H1 (cell line): ENCODE measurements at regions of chr3 and their contacts with region 1.

Region 1: DNA sequence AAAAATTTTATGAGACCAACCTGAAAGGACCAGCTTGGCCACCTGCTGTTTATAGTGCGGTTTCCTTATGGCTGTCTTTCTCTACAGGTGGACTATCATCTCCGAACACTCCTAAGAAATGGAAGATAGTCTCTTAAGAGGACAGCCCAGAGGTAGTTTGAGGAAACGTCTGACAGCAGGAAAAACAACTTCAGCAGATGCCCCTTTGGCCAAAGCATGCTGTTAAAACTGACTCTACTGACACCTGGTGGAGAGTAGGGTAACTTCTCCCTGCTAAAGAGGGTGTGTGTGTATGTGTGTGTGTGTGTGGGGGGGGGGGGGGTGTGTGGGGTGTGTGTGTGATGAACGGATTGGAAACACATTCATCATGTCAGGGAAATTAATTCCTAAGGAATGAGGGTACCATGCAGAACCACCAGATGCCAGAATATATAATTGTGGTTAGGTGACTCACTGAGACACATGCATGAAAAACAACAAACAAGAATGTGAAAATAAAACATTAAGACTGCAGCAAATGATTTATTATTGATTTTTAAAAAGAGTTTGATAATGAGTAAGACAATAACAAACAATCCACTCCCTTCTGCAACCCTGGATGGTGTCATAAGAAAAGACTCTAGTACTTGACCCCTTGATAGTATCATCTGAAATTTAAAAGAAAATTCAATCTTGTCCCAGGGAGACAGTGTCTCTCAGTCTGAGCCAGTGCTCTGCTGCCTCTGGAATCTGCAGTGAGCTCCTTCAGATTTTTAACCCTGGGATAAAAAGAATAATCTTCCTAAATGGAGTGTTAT is 256.5 kb downstream of the THRB start:
- DNase-seq: peak; percentile 10 to 51
- H3K4me3 ChIP-seq: no peak overlapping the region
- H3K27ac ChIP-seq: no peak overlapping the region
- H3K4me1 ChIP-seq: peaks cover 0 to 13% (median 2%) of the 10 kb centered on the region in 4 experiments; a peak in 3 of 7 replicates
- H3K27me3 ChIP-seq: no peaks in the 10 kb centered on the region
- CTCF ChIP-seq: peak; percentile 9 to 88 (median 76)
- EP300 ChIP-seq: no peak
- POLR2A ChIP-seq: no peak
- RAD21 ChIP-seq: peak; percentile 87 to 89

Region 2: GRCh38 chr3:23999012-23999641 is 239.0 kb before region 1 on chr3:
- CTCF ChIA-PET with region 1: interaction called, 36 read pairs
- POLR2A ChIA-PET with region 1: no interaction called
- DNase-seq: peak; percentile 27 to 92
- H3K4me3 ChIP-seq: no peak overlapping the region
- H3K27ac ChIP-seq: no peak overlapping the region
- H3K4me1 ChIP-seq: no peaks in the 10 kb centered on the region; a peak in 1 of 7 replicates
- H3K27me3 ChIP-seq: no peaks in the 10 kb centered on the region
- CTCF ChIP-seq: peak in 2 of 3 experiments; percentile 88 to 94; a peak in 3 of 4 replicates
- EP300 ChIP-seq: no peak
- POLR2A ChIP-seq: no peak
- RAD21 ChIP-seq: peak; percentile 100

Region 3: DNA sequence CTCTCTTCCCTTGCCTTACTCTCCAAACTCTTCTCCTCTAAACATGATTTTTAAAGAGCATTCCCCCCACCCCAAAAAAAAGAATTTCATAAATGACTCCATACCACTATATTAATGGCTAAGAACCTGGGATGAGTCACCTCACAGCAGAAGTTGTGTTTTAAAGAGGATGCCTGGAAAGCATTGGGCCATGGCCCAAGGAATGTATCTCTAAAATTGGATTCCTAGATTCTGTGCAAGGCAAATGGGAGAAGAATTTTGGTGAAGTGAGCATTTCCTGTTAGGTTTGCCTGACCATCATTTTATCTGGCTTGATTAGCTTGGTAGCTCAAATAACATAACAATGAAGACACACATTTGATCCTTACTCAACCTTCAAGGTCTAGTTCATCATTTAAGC is 41.6 kb before region 1 on chr3:
- CTCF ChIA-PET with region 1: interaction called, 21 read pairs
- POLR2A ChIA-PET with region 1: no interaction called
- DNase-seq: no peak
- H3K4me3 ChIP-seq: no peak overlapping the region
- H3K27ac ChIP-seq: no peak overlapping the region
- H3K4me1 ChIP-seq: no peaks in the 10 kb centered on the region
- H3K27me3 ChIP-seq: no peaks in the 10 kb centered on the region
- CTCF ChIP-seq: no peak
- EP300 ChIP-seq: no peak
- POLR2A ChIP-seq: no peak
- RAD21 ChIP-seq: no peak

Region 4: GRCh38 chr3:24220859-24221657 is 17.1 kb before region 1 on chr3:
- CTCF ChIA-PET with region 1: interaction called, 25 read pairs
- POLR2A ChIA-PET with region 1: no interaction called
- DNase-seq: peak in 1 of 2 experiments; percentile 19
- H3K4me3 ChIP-seq: no peak overlapping the region
- H3K27ac ChIP-seq: no peak overlapping the region
- H3K4me1 ChIP-seq: peaks cover 0 to 8% (median 4%) of the 10 kb centered on the region in 4 experiments; a peak in 3 of 7 replicates
- H3K27me3 ChIP-seq: peaks cover 0 to 1% (median 0%) of the 10 kb centered on the region in 4 experiments; a peak in 1 of 7 replicates
- CTCF ChIP-seq: no peak
- EP300 ChIP-seq: no peak
- POLR2A ChIP-seq: no peak
- RAD21 ChIP-seq: no peak

Region 5: DNA sequence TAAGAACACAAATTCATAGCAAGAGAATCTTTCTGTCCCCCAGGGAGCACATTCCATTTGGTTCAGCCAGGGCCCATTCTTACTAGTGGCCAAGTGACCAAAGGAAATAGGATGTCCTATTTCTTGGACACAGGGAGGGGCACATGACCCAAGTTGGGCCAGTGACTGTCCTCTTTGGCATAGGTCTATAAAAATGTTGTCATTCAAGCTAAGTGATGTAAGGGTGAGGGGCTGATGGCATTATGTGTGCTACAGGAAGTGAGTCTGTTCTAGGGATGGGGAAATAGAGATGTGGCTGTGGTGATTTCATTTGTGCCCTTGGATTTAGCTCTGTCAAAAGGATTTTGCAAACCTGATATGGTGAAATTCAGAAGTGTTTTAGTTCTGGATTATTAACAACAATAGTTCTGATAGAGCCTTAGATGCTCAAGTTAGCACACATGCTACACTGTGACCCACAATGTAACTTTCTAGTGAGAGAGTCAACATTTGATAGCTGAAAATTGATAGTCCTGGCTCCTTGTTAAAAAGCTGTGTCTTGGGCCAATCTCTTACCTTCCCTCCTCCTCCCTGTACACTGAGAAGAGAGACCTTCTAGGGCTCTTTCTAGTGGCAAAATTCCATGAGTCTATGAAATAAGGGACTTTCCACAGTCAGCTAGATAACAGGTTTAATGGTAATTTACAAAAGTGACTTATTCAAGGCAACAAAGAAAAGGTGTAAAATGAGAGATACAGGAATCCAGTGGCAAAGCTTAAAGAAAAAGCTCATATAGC is 139.2 kb after region 1 on chr3:
- CTCF ChIA-PET with region 1: no interaction called
- POLR2A ChIA-PET with region 1: no interaction called
- DNase-seq: no peak
- H3K4me3 ChIP-seq: no peak overlapping the region
- H3K27ac ChIP-seq: no peak overlapping the region
- H3K4me1 ChIP-seq: no peaks in the 10 kb centered on the region
- H3K27me3 ChIP-seq: no peaks in the 10 kb centered on the region
- CTCF ChIP-seq: no peak
- EP300 ChIP-seq: no peak
- POLR2A ChIP-seq: no peak
- RAD21 ChIP-seq: no peak